ENCODE measurements at regions of chr11 and their contacts with region 1.

Region 1: GRCh38 chr11:20387241-20388095 is at the start of gene PRMT3:
- DNase-seq: peak; percentile 90 to 99 (median 92)

Region 2: GRCh38 chr11:20363500-20364411 is 23.7 kb before region 1 on chr11 and contains the start of gene HTATIP2:
- intact Hi-C with region 1: loop called (anchors 1 kb)
- DNase-seq: peak; percentile 43 to 96 (median 70)

Region 3: DNA sequence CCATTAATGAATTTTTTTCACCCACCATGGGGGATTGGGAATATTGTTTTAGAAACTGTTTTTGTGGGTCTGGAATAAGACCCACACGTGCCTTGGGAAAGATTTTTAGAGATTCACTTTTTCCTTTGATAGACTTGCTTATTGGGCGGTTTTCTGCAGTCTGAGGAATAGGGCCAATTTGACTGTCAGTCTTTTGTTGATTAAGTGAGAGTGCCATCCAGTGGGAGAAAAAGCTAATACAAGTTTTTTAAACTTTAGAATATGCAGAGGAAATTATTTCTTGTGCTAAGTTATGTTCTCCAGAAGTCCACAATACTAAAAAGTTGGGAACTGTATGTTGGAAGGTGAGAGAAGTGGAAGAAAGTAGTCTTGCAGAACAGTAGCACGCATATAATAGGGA is 56.1 kb after region 1 on chr11:
- intact Hi-C with region 1: loop called (anchors 5 kb)
- DNase-seq: no peak

Region 4: GRCh38 chr11:20609727-20610707 is 222.5 kb after region 1 on chr11:
- intact Hi-C with region 1: loop called (anchors 1 kb)
- DNase-seq: peak; percentile 72 to 97 (median 84)